Dendritic cell treated with granulocyte-macrophage colony-stimulating factor and Interleukin-4, amounts not matched to agents 40 ng/mL and 50 ng/mL, for 4 days (primary cell): ENCODE measurements at regions of chr11 and their contacts with region 1.

Region 1: GRCh38 chr11:10933455-10934292 is 75.8 kb upstream of the ZBED5 start:
- H3K4me3 Mint-ChIP-seq: peak overlapping the region; percentile 60
- H3K27ac Mint-ChIP-seq: peak overlapping the region; percentile 72
- H3K4me1 Mint-ChIP-seq: peaks cover 62% of the 10 kb centered on the region
- H3K27me3 Mint-ChIP-seq: peaks cover 22% of the 10 kb centered on the region

Region 2: DNA sequence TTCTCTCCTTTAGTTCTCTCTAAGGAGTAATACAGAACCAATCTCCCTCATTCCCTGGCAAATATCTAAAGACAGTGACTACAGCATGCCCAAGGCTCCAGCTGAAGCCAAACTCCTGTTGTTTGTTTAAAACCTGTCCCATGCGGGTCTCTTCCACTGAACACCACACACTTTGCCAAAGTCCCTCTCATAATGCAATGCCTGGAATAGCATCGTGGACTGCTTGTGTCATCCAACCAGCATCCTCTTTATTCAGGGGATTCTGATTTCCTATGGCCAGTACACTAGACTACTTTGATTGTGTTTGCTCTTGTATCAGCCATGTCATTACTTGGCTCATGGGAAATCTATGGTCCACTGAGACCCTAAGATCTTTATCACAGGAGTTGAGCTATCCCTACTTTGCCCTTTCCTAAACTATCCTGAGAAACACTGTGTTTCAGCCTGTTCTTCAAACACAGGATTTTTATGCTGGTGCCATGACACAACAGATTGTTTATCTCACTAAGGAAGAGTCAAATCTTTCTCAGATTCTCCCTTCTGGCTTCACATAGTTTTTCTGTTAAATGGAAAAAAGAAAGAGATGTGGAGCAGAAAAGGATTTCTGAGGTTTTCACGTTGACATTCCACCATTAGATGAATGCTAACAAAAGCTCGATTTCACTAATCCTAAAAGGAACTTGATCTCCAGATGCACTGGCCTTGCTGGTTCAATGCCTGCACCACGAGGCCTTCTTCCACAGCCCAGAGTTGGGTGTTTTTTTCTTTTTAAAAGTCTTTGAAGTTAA is 224.2 kb before region 1 on chr11:
- intact Hi-C with region 1: no loop called
- H3K4me3 Mint-ChIP-seq: no peak overlapping the region
- H3K27ac Mint-ChIP-seq: no peak overlapping the region
- H3K4me1 Mint-ChIP-seq: no peaks in the 10 kb centered on the region
- H3K27me3 Mint-ChIP-seq: peaks cover 18% of the 10 kb centered on the region

Region 3: GRCh38 chr11:10792398-10792975 is 141.2 kb before region 1 on chr11:
- intact Hi-C with region 1: loop called (anchors 5 kb)
- H3K4me3 Mint-ChIP-seq: no peak overlapping the region
- H3K27ac Mint-ChIP-seq: no peak overlapping the region
- H3K4me1 Mint-ChIP-seq: peaks cover 21% of the 10 kb centered on the region
- H3K27me3 Mint-ChIP-seq: peaks cover 17% of the 10 kb centered on the region

Region 4: DNA sequence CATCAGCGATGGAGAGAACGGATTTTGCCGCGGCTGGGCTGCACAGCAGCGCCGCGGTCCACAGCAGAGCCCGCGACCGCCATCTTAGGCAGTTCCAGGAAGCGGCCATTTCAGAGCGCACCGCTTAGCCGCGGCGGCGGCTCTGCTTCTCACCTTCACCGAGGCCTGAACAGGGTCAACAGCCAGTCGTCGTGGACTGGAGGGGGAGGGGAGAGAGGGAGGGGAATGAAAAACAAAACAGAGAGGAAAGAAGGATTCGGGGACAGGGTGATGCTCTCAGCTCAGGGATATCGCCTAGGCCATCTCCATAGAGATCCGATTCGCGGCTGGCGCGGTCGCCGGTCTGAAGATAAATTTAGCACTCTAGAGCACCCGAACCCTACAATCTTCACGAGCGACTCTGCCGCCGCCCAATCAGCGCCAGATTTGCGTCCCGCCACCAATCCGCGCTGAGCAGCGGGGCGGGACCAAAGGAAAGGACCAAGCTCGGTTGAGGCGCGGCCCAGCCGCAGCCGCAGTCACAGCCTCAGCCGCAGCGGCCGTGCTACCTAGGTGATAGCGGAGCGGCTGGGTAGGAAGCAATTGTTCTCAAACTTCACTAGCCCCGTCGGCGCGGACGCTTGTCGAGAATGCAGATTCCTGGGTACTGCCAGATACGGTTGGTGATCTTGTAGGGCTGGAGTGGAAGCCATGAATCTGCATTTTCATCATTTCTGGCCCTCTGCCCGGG is 75.8 kb before region 1 on chr11 and contains the start of gene ZBED5:
- intact Hi-C with region 1: loop called (anchors 1 kb)
- H3K4me3 Mint-ChIP-seq: peak within 1 kb of the TSS; percentile 98
- H3K27ac Mint-ChIP-seq: peak within 1 kb of the TSS; percentile 97
- H3K4me1 Mint-ChIP-seq: peaks cover 29% of the 10 kb centered on the region
- H3K27me3 Mint-ChIP-seq: no peaks in the 10 kb centered on the region

Region 5: DNA sequence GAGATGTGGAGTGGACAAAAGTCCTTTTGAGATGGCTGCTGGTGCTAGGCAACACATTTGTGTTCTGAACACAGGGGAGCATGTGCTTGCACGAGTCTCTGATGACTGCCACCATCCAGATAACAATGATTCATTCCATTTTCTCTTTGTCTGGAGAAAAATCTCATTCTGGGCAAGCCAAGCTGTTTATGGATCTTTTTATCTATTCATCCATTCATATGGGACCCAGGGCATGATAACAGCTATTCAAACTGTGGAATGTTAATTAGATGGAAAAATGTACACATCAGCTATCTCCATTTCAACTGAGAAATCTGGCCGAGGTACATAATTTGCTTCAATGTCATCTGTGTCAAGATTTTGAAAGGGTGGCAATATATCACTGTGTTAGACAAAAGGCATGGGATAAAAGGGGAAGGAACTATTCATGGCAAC is 41.6 kb after region 1 on chr11:
- intact Hi-C with region 1: loop called (anchors 5 kb)
- H3K4me3 Mint-ChIP-seq: no peak overlapping the region
- H3K27ac Mint-ChIP-seq: peak overlapping the region; percentile 85
- H3K4me1 Mint-ChIP-seq: peaks cover 84% of the 10 kb centered on the region
- H3K27me3 Mint-ChIP-seq: no peaks in the 10 kb centered on the region

Region 6: GRCh38 chr11:10993186-10993585 is 59.5 kb after region 1 on chr11:
- intact Hi-C with region 1: no loop called
- H3K4me3 Mint-ChIP-seq: no peak overlapping the region
- H3K27ac Mint-ChIP-seq: peak overlapping the region; percentile 25
- H3K4me1 Mint-ChIP-seq: peaks cover 29% of the 10 kb centered on the region
- H3K27me3 Mint-ChIP-seq: peaks cover 8% of the 10 kb centered on the region

Region 7: DNA sequence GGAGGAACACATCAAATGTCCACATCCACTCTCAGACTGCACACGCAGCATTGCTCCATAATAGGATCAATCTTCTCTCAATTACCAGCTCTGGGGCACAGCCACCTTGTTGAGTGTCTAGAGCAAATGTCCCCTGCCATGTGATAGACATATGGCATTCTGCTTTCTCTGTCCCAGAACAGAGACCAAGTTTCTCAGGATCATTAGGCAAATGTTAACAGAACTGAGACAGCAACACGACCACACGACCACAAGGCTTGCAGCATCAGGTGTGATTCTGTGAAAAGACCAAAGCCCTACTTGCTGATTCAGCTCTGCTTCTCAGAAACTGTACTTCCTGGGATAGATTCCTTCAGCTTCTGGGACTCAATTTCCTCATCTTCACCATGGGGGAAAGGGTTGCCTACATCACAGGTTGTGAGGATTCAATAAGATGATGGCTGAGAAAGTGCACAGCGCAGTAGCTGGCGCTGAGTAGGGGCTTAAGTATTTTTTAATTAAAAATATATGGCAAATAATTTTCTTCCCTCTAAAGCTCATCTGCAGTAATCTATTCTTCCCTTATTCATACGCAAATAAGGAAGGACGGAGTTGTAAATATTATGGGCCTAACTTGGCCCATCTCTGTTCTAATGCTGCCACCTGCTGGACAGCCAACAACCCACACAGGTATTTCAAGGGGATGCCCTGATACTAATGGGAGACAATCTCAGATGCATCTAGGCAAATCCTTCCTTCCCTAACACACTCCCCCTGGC is 853.8 kb after region 1 on chr11:
- intact Hi-C with region 1: loop called (anchors 2 kb)
- H3K4me3 Mint-ChIP-seq: no peak overlapping the region
- H3K27ac Mint-ChIP-seq: no peak overlapping the region
- H3K4me1 Mint-ChIP-seq: peaks cover 21% of the 10 kb centered on the region
- H3K27me3 Mint-ChIP-seq: peaks cover 14% of the 10 kb centered on the region